ENCODE measurements at regions of chr2 and their contacts with region 1.

Region 1: DNA sequence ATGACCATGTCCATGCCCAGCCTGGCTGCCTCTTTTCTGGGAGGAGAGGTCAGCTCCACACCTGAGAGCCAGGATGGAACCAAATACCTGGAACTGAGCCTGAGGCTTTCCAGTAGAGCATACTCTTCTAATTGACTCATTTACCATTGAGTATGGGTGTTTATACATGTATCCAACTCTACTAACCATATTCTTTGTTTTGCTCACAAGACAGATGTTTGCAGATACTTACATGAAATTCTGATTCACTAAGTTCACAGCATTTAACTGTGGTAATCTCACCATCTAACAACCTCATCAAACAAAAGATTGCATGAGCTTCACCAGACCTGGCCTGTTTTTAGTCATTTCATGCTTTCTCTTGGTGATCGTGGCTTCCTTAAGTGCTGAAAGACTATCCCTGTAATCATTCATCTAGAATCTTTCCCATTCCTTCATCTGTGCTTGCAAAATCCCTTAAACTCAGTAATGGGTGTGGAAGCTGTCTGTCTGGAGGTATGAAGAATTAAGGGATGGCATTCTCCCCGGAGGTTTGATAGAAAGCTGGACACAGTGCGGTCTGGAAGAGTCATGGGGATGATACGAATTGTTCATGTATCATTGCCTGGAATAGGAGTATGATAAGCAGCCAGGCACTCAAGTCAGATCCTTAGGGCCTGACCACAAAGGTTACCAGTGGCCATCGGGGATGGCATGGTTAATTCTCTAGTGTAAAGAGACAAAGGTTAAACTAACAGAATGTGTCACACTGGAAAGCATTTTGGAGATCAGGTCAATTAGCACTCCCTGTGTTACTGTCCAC is 42.0 kb upstream of the IL1R1 start:
- DNase-seq: peak; percentile 52 to 61
- H3K4me3 ChIP-seq: no peak overlapping the region
- H3K4me3 Mint-ChIP-seq: no peak overlapping the region
- H3K27ac Mint-ChIP-seq: peak overlapping the region; percentile 66
- H3K4me1 ChIP-seq: peaks cover 36% of the 10 kb centered on the region
- H3K4me1 Mint-ChIP-seq: peaks cover 39% of the 10 kb centered on the region
- H3K27me3 ChIP-seq: no peaks in the 10 kb centered on the region
- H3K27me3 Mint-ChIP-seq: no peaks in the 10 kb centered on the region
- CTCF ChIP-seq: no peak

Region 2: DNA sequence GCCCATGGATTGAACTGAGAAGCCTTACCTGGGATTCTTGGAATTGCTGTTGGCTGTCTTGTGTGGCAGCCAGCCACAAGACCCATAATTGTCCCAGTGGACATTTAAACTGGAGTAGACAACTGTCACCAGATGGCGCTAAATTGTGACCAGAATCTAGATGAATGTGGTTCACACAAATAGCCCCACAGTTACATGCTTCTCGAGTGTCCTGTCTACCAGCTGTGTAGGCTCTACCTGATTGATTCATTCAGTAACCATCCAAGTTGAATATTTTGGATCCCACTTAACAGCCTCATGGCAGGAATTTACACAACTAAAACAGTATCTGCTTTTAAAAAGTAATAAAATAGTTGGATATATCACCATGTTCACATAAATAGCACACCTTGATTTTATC is 329.8 kb before region 1 on chr2:
- CTCF ChIA-PET with region 1: no interaction called
- POLR2A ChIA-PET with region 1: no interaction called
- intact Hi-C with region 1: no loop called
- DNase-seq: peak; percentile 67 to 70
- H3K4me3 ChIP-seq: no peak overlapping the region
- H3K4me3 Mint-ChIP-seq: no peak overlapping the region
- H3K27ac Mint-ChIP-seq: peak overlapping the region; percentile 72
- H3K4me1 ChIP-seq: peaks cover 50% of the 10 kb centered on the region
- H3K4me1 Mint-ChIP-seq: peaks cover 56% of the 10 kb centered on the region
- H3K27me3 ChIP-seq: no peaks in the 10 kb centered on the region
- H3K27me3 Mint-ChIP-seq: no peaks in the 10 kb centered on the region
- CTCF ChIP-seq: peak; percentile 43 to 56

Region 3: DNA sequence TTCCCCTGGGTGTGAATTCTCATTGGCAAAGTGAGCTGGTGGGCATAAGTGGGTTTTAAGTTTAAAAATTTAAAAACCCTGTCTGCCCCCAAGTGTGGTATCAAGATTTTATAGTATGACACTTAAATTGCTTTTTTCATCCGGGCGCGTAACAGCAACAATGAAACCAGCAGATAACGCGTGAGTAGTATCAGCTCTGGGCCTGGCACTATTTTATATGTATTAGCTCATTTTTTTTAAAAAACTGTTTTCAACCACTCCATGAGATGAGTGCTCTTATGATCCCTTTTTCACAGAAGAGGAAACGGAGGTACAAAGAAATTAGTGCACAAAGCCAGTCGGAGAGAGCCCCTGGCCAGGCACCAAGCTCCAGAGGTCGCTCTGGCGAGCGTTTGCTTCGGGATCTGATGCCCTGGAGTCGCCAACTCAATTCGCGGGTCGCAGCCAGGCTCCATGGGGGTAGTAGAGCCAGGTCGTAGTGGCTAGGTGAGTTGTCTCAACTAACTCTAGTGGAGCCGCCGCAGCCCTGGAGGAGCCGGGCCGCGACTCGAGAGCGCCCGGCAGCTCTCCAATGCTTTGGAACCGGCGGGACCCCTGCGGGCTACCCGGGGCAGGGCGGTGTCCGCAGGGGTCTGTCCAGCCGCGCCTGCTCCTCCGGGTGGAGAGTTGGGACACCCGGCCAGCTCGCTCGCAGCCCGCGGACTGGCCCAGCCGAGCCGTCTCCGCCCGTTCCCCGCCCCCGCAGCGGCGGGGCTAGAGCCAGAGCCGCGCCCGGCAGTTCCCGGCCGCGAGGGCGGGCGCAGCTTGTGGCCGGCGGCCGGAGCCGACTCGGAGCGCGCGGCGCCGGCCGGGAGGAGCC is 41.7 kb after region 1 on chr2 and contains the start of gene IL1R1:
- CTCF ChIA-PET with region 1: no interaction called
- POLR2A ChIA-PET with region 1: interaction called, 5 read pairs
- intact Hi-C with region 1: loop called (anchors 2 kb)
- DNase-seq: peak; percentile 72 to 89
- H3K4me3 ChIP-seq: peak within 1 kb of the TSS; percentile 48
- H3K4me3 Mint-ChIP-seq: peak within 1 kb of the TSS; percentile 90
- H3K27ac Mint-ChIP-seq: peak within 1 kb of the TSS; percentile 95
- H3K4me1 ChIP-seq: no peaks in the 10 kb centered on the region
- H3K4me1 Mint-ChIP-seq: peaks cover 6% of the 10 kb centered on the region
- H3K27me3 ChIP-seq: no peaks in the 10 kb centered on the region
- H3K27me3 Mint-ChIP-seq: no peaks in the 10 kb centered on the region
- CTCF ChIP-seq: peak in 1 of 2 experiments; percentile 24
- total RNA-seq, gene IL1R1: 23.5 and 25.0 TPM in 2 replicates